BJ (cell line): ENCODE measurements at regions of chr18 and their contacts with region 1.

Region 1: GRCh38 chr18:2223849-2224248 is 347.5 kb downstream of the METTL4 start:
- DNase-seq: no peak
- H3K4me3 ChIP-seq: no peak overlapping the region
- H3K27me3 ChIP-seq: no peaks in the 10 kb centered on the region
- CTCF ChIP-seq: peak; percentile 58

Region 2: DNA sequence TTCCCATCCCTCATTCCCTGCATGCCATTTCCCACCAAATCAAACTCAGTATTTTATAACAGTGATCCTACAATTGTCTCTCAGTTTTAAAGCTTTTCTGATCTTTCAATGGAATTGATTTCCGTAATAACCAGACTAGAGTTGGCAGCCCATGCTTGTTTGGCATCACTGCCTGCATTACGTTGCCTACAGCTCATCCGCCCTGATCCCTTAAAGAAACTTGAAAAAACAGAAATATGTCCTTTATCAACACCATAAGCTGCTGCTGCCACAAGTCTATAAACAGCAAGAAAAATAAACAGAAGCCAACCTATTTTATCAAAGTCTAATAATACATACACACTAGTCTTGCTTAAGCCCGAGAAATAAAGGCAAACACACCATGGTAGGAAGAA is 16.5 kb after region 1 on chr18:
- CTCF ChIA-PET with region 1: interaction called, 10 read pairs
- POLR2A ChIA-PET with region 1: no interaction called
- DNase-seq: no peak
- H3K4me3 ChIP-seq: no peak overlapping the region
- H3K27me3 ChIP-seq: no peaks in the 10 kb centered on the region
- CTCF ChIP-seq: no peak

Region 3: DNA sequence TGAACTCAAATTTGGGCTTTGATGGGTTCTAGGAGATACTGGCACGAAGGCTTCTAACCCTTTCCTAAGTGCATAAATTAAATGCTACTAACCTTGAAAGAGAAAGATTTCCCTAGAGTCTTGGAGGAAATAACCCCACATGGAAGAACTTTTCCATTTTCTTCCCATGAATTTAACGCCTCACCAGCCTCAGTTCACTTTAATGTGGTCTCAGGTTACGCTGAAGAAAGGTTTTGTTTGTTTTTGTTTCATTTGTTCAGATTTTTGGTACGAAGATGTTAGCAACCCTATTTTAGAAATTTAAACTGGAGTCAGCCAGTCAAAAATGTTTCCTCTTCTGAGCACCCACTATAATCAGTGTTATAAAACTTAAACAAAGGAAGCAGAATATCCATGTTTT is 316.7 kb after region 1 on chr18:
- CTCF ChIA-PET with region 1: interaction called, 10 read pairs
- POLR2A ChIA-PET with region 1: no interaction called
- DNase-seq: no peak
- H3K4me3 ChIP-seq: no peak overlapping the region
- H3K27me3 ChIP-seq: no peaks in the 10 kb centered on the region
- CTCF ChIP-seq: no peak